OCI-LY7 (cell line): ENCODE measurements at regions of chr1 and their contacts with region 1.

Region 1: DNA sequence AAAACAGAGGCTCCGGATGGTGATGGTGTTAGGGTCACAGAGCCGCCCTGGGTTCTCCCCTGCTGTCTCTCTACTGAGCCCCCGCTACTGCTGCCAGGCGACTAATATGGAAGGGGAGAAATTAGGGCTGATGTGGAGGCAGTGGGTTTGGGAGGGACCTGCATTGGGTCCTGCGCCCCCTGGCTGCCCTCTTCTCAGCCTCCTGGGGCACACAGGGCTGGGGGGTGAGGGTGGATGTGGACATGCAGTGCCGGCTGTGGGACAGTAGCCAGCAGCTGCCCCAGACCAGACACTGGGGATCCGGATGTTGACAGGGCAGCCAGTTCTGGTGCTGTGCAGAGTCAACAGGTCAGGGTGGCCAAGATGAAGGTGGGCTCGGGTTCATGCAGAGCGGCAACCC is 1.5 kb upstream of the CLCNKB start:
- DNase-seq: peak; percentile 15
- H3K4me3 ChIP-seq: no peak overlapping the region
- H3K27ac ChIP-seq: no peak overlapping the region
- H3K4me1 ChIP-seq: no peaks in the 10 kb centered on the region
- CTCF ChIP-seq: peak; percentile 55

Region 2: DNA sequence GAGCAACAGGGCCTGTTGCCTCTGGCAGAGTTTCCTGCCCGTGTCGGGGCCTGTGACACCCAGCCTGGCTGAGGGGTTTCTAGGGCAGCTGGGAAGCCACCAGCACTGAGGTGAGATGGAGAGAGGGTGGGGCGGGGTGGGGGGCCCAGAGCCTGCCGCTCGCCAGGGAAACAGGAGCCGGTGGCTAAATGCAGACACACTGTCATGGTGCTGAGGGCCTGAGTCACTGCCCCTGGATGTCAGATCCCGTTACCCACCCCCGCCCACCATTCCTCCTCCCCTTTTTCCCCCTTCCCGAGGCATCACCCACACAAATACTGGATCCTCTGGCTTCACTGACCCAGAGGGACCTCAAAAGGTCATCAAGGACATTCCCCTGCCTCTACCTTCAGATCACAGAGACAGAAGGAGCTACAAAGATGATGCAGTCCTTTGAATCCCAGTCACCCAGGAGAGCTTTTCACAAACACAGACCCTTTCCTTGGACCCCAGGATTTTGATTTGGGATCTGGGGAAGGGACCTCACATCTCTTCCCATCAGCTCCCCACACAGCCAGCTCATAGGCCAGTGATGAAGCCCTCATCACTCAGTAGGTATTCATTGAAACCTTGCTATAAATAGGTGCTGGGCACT is 22.3 kb before region 1 on chr1:
- CTCF ChIA-PET with region 1: interaction called, 5 read pairs
- POLR2A ChIA-PET with region 1: no interaction called
- intact Hi-C with region 1: loop called (anchors 2 kb)
- DNase-seq: no peak
- H3K4me3 ChIP-seq: no peak overlapping the region
- H3K27ac ChIP-seq: no peak overlapping the region
- H3K4me1 ChIP-seq: peaks cover 3% of the 10 kb centered on the region
- CTCF ChIP-seq: no peak

Region 3: DNA sequence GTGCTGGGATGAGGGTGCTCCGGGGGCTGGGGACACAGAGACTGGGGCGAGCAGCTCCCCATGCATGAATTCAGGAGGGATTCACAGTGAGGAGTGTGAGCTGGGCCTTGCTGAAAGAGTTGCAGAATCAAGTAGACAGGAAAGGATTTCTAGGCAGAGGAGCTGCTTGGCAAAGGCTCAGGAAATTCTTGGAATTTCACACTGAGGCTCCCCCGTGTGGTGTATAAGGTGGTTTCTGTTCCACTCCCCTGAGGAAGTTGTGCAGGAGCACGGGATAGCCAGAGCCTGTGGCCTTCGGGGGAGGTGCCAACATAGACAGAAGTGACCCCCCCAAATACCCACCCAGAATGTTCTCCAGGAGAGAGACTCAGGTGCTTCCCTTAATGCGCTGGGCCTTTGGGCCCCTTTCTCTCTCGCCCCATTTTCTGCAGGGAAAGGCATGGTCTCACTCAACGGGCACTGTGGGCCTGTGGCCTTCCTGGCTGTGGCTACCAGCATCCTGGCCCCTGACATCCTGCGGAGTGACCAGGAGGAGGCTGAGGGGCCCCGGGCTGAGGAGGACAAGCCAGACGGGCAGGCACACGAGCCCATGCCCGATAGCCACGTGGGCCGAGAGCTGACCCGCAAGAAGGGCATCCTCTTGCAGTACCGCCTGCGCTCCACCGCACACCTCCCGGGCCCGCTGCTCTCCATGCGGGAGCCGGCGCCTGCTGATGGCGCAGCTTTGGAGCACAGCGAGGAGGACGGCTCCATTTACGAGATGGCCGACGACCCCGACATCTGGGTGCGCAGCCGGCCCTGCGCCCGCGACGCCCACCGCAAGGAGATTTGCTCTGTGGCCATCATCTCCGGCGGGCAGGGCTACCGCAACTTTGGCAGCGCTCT is 1654.6 kb after region 1 on chr1:
- CTCF ChIA-PET with region 1: no interaction called
- POLR2A ChIA-PET with region 1: no interaction called
- intact Hi-C with region 1: no loop called
- DNase-seq: no peak
- H3K4me3 ChIP-seq: no peak overlapping the region
- H3K27ac ChIP-seq: no peak overlapping the region
- H3K4me1 ChIP-seq: no peaks in the 10 kb centered on the region
- CTCF ChIP-seq: no peak